Activated B cell treated with CpG ODN at 0.5 μM for 24 hours (primary cell): ENCODE measurements at regions of chr1 and their contacts with region 1.

Region 1: DNA sequence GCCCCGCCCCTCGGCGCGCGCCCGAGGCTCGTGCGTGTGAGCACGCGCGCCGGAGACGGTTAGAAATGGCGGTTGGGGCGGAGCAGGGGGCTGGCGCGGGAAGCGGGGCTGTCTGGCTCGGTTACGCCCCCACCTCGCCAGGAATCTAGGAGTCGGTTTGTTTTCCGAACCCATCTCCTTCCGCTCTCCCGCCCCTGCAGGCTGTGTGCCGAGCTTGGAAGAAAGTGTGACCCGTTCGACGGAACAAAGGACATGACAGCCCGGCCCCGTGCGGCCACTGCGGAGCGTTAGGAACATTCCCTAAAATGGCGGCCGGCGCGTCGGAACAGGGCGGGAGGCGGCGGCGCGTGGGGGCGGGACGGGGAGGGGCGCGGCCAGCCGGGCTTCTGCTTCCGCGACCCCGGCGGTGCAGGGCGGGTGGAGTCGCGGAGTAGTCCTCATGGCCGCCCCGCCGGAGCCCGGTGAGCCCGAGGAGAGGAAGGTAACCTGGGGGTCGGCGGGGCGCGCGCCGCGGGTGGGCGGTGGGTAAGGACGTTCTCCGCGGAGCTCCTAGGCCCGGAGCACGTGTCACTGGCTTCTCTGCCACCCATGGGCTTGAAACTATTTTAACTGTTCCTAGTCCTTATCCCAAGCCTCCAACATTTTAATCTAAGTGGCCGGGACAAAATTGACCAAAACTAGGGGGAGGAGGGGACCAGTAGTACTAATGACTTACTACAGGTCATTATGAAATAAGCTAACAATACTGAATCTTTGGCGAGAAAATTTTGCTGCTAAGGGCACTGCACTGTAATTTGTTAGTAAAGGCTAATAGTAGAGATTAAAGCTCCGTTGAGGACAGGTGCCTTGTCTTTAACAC is at the start of gene COX20:
- DNase-seq: peak; percentile 95
- ATAC-seq: peak; percentile 66
- H3K4me3 Mint-ChIP-seq: peak within 1 kb of the TSS; percentile 97
- H3K27ac Mint-ChIP-seq: peak within 1 kb of the TSS; percentile 99
- H3K4me1 Mint-ChIP-seq: peaks cover 56% of the 10 kb centered on the region
- H3K27me3 Mint-ChIP-seq: no peaks in the 10 kb centered on the region
- CTCF ChIP-seq: no peak
- total RNA-seq, gene COX20: 37.1 and 37.6 TPM in 2 replicates

Region 2: DNA sequence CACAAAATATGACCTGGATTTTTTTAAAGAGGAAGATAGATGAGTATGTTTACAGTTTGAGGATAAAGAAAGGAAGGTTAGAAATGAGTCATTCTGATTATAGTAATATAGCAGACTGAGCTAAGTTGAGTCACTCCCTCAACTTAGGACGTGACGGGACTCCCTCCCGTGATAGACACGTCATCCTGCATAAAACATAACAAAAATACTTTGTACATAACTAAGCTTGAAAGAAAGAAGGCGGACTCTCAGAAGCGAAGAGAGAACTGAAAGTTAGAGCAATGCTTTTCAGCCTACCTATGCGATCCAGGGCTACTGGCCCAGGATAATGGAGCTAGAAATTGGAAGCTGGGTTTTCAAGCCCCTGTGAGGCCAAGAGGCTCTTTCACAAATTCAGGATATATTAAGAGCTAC is 235.6 kb before region 1 on chr1:
- CTCF ChIA-PET with region 1: no interaction called
- POLR2A ChIA-PET with region 1: interaction called, 11 read pairs
- intact Hi-C with region 1: no loop called
- DNase-seq: no peak
- ATAC-seq: peak; percentile 91
- H3K4me3 Mint-ChIP-seq: no peak overlapping the region
- H3K27ac Mint-ChIP-seq: no peak overlapping the region
- H3K4me1 Mint-ChIP-seq: peaks cover 11% of the 10 kb centered on the region
- H3K27me3 Mint-ChIP-seq: no peaks in the 10 kb centered on the region
- CTCF ChIP-seq: no peak

Region 3: DNA sequence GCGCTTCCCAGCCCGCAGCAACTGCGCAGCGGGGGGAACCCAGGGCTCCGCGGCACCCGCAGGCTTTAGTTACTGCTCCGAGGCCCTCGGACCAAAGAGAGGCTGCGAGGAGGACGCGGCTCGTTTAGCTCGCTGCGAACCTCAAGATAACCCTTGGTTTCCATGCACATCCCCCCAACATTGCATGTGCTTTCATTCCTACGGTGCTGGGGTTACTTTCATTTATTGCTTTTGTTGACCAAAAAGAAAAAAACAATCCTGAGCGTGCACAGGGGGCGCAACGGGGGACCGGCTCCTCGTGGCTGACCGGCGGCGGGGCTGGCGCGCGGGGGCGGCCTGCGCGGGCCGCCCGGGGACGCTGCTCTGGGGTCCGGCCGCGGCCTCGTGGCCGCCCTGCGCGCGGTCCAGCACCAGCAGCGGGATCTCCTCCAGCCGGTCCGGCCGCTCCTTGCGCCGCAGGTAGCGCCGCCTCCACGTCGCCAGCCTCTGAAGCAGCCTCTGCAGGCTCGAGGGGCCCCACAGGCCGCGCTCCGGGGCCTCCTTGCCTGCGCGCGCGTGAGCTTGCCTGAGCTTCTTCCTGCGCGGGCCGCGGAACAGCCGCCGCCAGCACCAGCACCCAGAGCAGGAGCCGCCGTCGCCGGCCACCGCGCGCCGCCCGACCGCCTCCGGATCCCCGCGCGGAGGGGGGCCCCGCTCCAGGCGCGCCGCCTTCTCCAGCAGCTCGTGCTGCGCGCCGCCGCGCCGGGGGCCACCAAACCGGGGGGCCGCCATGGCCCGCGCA is 105.2 kb before region 1 on chr1:
- CTCF ChIA-PET with region 1: interaction called, 3 read pairs
- POLR2A ChIA-PET with region 1: interaction called, 19 read pairs
- intact Hi-C with region 1: loop called (anchors 1 kb)
- DNase-seq: peak; percentile 48
- ATAC-seq: peak; percentile 46
- H3K4me3 Mint-ChIP-seq: peak overlapping the region; percentile 87
- H3K27ac Mint-ChIP-seq: peak overlapping the region; percentile 83
- H3K4me1 Mint-ChIP-seq: peaks cover 23% of the 10 kb centered on the region
- H3K27me3 Mint-ChIP-seq: no peaks in the 10 kb centered on the region
- CTCF ChIP-seq: no peak

Region 4: DNA sequence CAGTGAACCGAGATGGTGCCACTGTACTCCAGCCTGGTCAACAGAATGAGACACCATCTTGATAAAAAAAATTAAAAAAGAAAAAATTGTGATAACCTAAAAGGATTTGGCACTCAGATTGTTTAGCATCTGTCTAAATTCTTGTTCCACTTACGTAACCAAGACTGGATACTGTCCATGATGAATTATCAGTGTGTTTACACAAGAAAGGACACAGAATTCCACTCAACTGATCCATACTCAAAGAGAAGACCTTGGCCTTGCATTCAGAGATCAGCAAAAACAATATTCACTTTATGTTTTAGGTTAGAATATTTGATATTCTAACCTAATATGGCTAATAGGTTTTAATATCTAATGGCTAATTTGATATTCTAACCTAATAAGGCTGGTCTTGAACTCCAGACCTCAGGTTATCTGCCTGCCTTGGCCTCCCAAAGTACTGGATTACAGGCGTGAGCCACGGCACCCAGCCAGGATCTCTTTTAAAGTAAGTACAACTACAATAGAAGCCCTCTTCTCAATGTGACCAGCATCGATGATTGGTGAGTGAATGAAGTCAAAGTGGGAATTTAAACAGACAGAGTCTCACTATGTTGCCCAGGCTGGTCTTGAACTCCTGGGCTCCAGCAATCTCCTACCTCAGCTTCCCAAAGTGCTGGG is 43.2 kb before region 1 on chr1:
- CTCF ChIA-PET with region 1: no interaction called
- POLR2A ChIA-PET with region 1: no interaction called
- intact Hi-C with region 1: no loop called
- DNase-seq: no peak
- ATAC-seq: no peak
- H3K4me3 Mint-ChIP-seq: no peak overlapping the region
- H3K27ac Mint-ChIP-seq: no peak overlapping the region
- H3K4me1 Mint-ChIP-seq: peaks cover 11% of the 10 kb centered on the region
- H3K27me3 Mint-ChIP-seq: peaks cover 3% of the 10 kb centered on the region
- CTCF ChIP-seq: no peak

Region 5: DNA sequence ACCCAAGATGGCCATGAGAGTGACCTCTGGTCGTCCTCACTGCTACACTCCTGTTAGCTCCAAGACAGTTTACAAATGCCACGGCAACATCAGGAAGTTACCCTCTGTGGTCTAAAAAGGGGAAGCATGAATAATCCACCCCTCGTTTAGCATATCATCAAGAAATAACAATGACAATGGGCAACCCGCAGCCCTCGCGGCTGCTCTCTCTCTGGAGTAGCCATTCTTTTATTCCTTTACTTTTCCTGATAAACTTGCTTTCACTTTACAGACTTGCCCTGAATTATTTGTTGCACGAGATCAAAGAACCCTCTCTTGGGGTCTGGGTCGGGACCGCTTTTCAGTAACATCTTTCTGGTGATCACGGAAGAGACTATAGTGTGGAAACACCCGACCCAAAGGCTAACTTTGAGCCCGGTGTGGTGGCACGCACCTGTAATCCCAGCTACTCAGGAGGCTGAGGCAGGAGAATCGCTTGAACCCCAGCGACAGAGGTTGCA is 19.9 kb before region 1 on chr1:
- CTCF ChIA-PET with region 1: interaction called, 4 read pairs
- POLR2A ChIA-PET with region 1: interaction called, 71 read pairs
- intact Hi-C with region 1: loop called (anchors 1 kb)
- DNase-seq: no peak
- ATAC-seq: peak; percentile 56
- H3K4me3 Mint-ChIP-seq: peak overlapping the region; percentile 82
- H3K27ac Mint-ChIP-seq: peak overlapping the region; percentile 84
- H3K4me1 Mint-ChIP-seq: peaks cover 28% of the 10 kb centered on the region
- H3K27me3 Mint-ChIP-seq: no peaks in the 10 kb centered on the region
- CTCF ChIP-seq: no peak

Region 6: GRCh38 chr1:244854865-244855578 is 19.5 kb after region 1 on chr1:
- CTCF ChIA-PET with region 1: interaction called, 4 read pairs
- POLR2A ChIA-PET with region 1: interaction called, 364 read pairs
- intact Hi-C with region 1: loop called (anchors 1 kb)
- DNase-seq: no peak
- ATAC-seq: no peak
- H3K4me3 Mint-ChIP-seq: no peak overlapping the region
- H3K27ac Mint-ChIP-seq: peak overlapping the region; percentile 70
- H3K4me1 Mint-ChIP-seq: peaks cover 64% of the 10 kb centered on the region
- H3K27me3 Mint-ChIP-seq: no peaks in the 10 kb centered on the region
- CTCF ChIP-seq: no peak

Region 7: GRCh38 chr1:244881552-244882280 is 46.2 kb after region 1 on chr1:
- CTCF ChIA-PET with region 1: no interaction called
- POLR2A ChIA-PET with region 1: no interaction called
- intact Hi-C with region 1: no loop called
- DNase-seq: no peak
- ATAC-seq: no peak
- H3K4me3 Mint-ChIP-seq: no peak overlapping the region
- H3K27ac Mint-ChIP-seq: no peak overlapping the region
- H3K4me1 Mint-ChIP-seq: peaks cover 5% of the 10 kb centered on the region
- H3K27me3 Mint-ChIP-seq: peaks cover 4% of the 10 kb centered on the region
- CTCF ChIP-seq: no peak

Region 8: DNA sequence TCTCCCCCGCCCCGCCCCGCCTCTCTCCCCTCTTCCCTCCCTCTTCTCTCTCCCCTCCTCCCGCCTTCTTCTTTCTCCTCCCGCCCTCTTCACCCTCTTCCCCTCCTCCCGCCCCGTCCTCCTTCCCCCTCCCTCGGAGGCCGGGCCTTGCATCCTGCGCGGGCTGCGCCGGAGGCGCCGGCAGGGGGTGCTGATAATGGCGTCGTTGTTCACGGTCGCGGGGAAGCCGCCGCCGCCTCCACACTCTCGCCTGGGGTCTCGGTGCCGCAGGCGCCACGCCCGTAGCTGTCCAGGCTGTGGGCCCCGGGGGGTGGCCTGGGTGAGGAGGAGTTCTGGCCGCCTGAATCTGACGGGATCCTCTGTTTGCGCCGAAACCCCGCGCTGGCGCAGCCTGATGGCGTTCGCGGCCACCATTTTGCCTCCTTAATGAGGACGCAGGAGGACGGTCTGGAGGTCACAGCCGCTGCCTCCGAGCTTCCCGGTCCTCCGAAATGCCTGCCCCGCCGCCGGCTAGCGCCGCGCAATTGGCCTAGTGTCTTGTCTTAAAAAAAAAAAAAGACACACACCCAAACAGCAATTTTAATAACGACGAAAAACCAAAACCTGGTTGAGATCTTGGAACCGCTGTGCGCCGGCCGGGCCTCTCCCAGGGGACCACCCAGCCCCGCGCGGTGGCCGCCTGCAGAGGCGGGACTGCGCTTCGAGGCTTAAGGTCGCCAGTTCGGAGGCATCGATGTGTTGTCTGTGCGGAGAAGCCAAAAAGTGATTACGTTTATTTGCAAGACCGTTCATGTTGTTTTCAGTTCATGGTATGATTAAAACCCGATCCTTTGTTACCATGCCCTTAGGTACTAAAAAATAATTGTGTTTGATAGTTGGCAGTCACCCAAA is 135.4 kb after region 1 on chr1:
- CTCF ChIA-PET with region 1: interaction called, 6 read pairs
- POLR2A ChIA-PET with region 1: interaction called, 137 read pairs
- intact Hi-C with region 1: loop called (anchors 1 kb)
- DNase-seq: peak; percentile 91
- ATAC-seq: peak; percentile 75
- H3K4me3 Mint-ChIP-seq: peak overlapping the region; percentile 95
- H3K27ac Mint-ChIP-seq: peak overlapping the region; percentile 99
- H3K4me1 Mint-ChIP-seq: peaks cover 17% of the 10 kb centered on the region
- H3K27me3 Mint-ChIP-seq: no peaks in the 10 kb centered on the region
- CTCF ChIP-seq: no peak

Region 9: GRCh38 chr1:245197911-245198379 is 362.4 kb after region 1 on chr1:
- CTCF ChIA-PET with region 1: no interaction called
- POLR2A ChIA-PET with region 1: no interaction called
- intact Hi-C with region 1: no loop called
- DNase-seq: no peak
- ATAC-seq: no peak
- H3K4me3 Mint-ChIP-seq: no peak overlapping the region
- H3K27ac Mint-ChIP-seq: no peak overlapping the region
- H3K4me1 Mint-ChIP-seq: no peaks in the 10 kb centered on the region
- H3K27me3 Mint-ChIP-seq: peaks cover 21% of the 10 kb centered on the region
- CTCF ChIP-seq: no peak

Region 10: GRCh38 chr1:246579818-246580217 is 1744.3 kb after region 1 on chr1:
- CTCF ChIA-PET with region 1: no interaction called
- POLR2A ChIA-PET with region 1: no interaction called
- intact Hi-C with region 1: loop called (anchors 10 kb)
- DNase-seq: no peak
- ATAC-seq: peak; percentile 75
- H3K4me3 Mint-ChIP-seq: peak overlapping the region; percentile 55
- H3K27ac Mint-ChIP-seq: peak overlapping the region; percentile 66
- H3K4me1 Mint-ChIP-seq: peaks cover 60% of the 10 kb centered on the region
- H3K27me3 Mint-ChIP-seq: no peaks in the 10 kb centered on the region
- CTCF ChIP-seq: no peak